ENCODE measurements at regions of chr11 and their contacts with region 1.

Region 1: DNA sequence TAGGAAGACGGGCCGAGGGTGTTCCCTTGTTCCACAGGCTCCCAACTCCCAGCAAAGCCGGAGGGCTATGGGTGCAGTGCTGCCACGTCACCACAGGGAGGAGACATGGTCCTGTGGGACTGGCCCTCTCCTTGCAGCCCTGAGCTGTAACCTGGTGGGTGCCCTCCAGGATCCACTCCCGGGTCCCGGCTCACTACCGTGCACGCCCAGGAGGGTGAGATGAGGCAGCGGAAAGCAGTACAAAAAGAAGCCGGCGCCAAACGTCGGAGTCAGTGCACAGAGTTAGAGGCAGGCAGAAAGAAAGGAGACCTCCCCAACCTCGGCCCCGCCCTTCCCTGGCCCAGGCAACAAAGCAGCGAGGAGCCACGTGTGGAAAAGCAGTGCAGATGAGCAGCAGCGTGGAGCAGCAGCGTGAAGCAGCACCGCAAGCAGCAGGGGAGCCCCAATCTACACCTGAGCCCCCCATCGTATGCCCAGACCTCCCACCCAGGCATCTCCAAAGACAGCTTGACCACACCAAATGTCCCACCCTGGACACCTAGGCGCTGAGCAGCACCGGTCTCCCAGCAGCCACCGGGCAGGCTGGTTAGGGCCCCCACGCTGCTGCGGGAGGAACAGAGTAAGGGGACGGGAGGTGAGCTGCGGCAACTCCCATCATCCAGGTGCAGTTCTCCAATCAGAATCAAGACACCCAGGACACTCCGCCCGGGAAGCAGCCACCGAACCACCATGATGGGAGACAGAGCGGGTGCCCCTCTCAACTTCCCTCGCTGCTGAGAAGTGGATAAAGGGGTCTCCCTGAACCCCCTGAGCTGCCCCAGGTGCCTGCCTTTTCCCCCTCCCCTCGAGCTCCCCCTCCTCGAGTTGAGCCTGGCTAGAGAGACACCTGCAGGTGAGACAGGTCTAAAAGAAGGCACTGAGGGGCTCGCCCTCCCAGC is 28.8 kb downstream of the IGSF9B start:
- DNase-seq: peak; percentile 79
- H3K4me3 Mint-ChIP-seq: peak overlapping the region; percentile 54
- H3K27ac Mint-ChIP-seq: peak overlapping the region; percentile 71
- H3K4me1 Mint-ChIP-seq: peaks cover 27% of the 10 kb centered on the region
- H3K27me3 Mint-ChIP-seq: no peaks in the 10 kb centered on the region

Region 2: GRCh38 chr11:133956650-133957633 is 29.0 kb after region 1 on chr11 and contains the start of gene IGSF9B:
- CTCF ChIA-PET with region 1: interaction called, 16 read pairs
- intact Hi-C with region 1: loop called (anchors 1 kb)
- DNase-seq: peak; percentile 91
- H3K4me3 Mint-ChIP-seq: peak within 1 kb of the TSS; percentile 85
- H3K27ac Mint-ChIP-seq: peak within 1 kb of the TSS; percentile 86
- H3K4me1 Mint-ChIP-seq: peaks cover 45% of the 10 kb centered on the region
- H3K27me3 Mint-ChIP-seq: no peaks in the 10 kb centered on the region
- total RNA-seq, gene IGSF9B: 26.5 to 34.0 TPM

Region 3: GRCh38 chr11:134033696-134034491 is 105.9 kb after region 1 on chr11:
- CTCF ChIA-PET with region 1: interaction called, 11 read pairs
- intact Hi-C with region 1: loop called (anchors 1 kb)
- DNase-seq: peak; percentile 84
- H3K4me3 Mint-ChIP-seq: peak overlapping the region; percentile 44
- H3K27ac Mint-ChIP-seq: peak overlapping the region; percentile 43
- H3K4me1 Mint-ChIP-seq: peaks cover 52% of the 10 kb centered on the region
- H3K27me3 Mint-ChIP-seq: no peaks in the 10 kb centered on the region

Region 4: GRCh38 chr11:134119094-134119493 is 191.1 kb after region 1 on chr11:
- CTCF ChIA-PET with region 1: no interaction called
- intact Hi-C with region 1: no loop called
- DNase-seq: no peak
- H3K4me3 Mint-ChIP-seq: no peak overlapping the region
- H3K27ac Mint-ChIP-seq: no peak overlapping the region
- H3K4me1 Mint-ChIP-seq: peaks cover 2% of the 10 kb centered on the region
- H3K27me3 Mint-ChIP-seq: peaks cover 20% of the 10 kb centered on the region

Region 5: DNA sequence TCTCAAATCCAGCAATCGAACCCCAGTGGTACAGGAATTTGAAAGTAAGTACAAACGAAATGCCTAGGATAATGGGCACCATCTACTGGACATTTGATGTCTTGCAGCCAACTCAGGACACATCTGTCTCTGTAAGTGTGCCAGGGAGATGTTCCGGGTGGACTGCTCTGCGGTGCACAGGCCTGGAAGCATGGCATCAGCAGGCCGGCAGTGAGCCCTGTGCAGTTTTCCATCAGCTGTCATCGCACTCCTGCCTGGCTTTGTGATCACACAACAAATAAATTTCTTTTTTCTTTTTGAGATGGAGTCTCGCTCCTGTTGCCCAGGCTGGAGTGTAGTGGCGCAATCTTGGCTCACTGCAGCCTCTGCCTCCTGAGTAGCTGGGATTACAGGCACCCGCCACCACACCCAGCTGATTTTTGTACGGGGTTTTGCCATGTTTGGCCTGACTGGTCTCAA is 211.9 kb after region 1 on chr11:
- CTCF ChIA-PET with region 1: interaction called, 6 read pairs
- intact Hi-C with region 1: loop called (anchors 1 kb)
- DNase-seq: peak; percentile 72
- H3K4me3 Mint-ChIP-seq: no peak overlapping the region
- H3K27ac Mint-ChIP-seq: no peak overlapping the region
- H3K4me1 Mint-ChIP-seq: peaks cover 6% of the 10 kb centered on the region
- H3K27me3 Mint-ChIP-seq: no peaks in the 10 kb centered on the region

Region 6: DNA sequence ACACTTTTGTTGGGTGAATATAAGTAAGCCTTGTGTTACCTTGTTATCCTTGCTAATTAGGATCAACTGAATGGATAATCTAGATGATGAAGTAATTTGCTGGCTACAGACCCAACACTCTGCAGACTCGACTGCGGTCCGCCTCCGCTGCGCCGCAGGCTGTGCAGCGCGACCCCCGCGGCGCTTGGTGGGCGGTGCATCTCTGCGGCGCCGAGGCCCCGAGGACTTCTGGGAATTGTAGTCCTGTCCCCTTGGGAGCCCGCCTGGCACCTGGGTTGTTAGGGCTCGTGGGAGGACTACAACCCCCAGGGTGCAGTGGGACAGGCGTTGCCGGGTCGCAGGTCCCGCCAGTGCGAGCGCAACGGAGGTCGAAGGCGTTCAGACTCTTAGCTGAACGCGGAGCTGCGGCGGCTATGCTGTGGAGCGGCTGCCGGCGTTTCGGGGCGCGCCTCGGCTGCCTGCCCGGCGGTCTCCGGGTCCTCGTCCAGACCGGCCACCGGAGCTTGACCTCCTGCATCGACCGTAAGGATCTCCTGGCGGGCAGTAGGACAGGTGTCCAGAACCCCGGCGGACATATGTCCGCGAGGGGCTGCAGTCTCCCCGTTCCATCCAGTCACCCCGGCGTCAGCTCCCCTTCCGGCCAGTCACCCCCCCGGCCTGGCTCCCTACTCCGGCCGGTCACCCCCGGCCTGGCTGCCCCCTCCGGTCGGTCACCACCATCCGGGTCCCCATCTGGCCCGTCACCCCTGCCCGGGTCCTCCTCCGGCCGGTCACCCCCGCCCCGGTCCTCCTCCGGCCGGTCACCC is 325.4 kb after region 1 on chr11 and contains the starts of genes ACAD8 and THYN1:
- CTCF ChIA-PET with region 1: no interaction called
- intact Hi-C with region 1: loop called (anchors 2 kb)
- DNase-seq: peak; percentile 97
- H3K4me3 Mint-ChIP-seq: peak within 1 kb of the TSS; percentile 90
- H3K27ac Mint-ChIP-seq: peak within 1 kb of the TSS; percentile 54
- H3K4me1 Mint-ChIP-seq: peaks cover 26% of the 10 kb centered on the region
- H3K27me3 Mint-ChIP-seq: no peaks in the 10 kb centered on the region
- total RNA-seq, gene ACAD8: 14.8 to 17.6 TPM
- total RNA-seq, gene THYN1: 85.6 to 92.6 TPM

Measured in activated naive CD4-positive, alpha-beta T cell treated with anti-CD3 and anti-CD28 coated beads for 36 hours (primary cell).